Caco-2 (cell line): ENCODE measurements at regions of chr5 and their contacts with region 1.

Region 1: GRCh38 chr5:74903165-74903787 is 37.1 kb upstream of the FAM169A start:
- DNase-seq: peak; percentile 81 to 84
- H3K4me3 ChIP-seq: no peak overlapping the region
- H3K4me3 Mint-ChIP-seq: no peak overlapping the region
- H3K27ac Mint-ChIP-seq: no peak overlapping the region
- H3K4me1 ChIP-seq: peaks cover 7% of the 10 kb centered on the region; the same call in 1 of the 2 replicates
- H3K4me1 Mint-ChIP-seq: peaks cover 7% of the 10 kb centered on the region
- H3K27me3 ChIP-seq: no peaks in the 10 kb centered on the region
- H3K27me3 Mint-ChIP-seq: no peaks in the 10 kb centered on the region
- CTCF ChIP-seq: peak; percentile 83 to 93

Region 2: DNA sequence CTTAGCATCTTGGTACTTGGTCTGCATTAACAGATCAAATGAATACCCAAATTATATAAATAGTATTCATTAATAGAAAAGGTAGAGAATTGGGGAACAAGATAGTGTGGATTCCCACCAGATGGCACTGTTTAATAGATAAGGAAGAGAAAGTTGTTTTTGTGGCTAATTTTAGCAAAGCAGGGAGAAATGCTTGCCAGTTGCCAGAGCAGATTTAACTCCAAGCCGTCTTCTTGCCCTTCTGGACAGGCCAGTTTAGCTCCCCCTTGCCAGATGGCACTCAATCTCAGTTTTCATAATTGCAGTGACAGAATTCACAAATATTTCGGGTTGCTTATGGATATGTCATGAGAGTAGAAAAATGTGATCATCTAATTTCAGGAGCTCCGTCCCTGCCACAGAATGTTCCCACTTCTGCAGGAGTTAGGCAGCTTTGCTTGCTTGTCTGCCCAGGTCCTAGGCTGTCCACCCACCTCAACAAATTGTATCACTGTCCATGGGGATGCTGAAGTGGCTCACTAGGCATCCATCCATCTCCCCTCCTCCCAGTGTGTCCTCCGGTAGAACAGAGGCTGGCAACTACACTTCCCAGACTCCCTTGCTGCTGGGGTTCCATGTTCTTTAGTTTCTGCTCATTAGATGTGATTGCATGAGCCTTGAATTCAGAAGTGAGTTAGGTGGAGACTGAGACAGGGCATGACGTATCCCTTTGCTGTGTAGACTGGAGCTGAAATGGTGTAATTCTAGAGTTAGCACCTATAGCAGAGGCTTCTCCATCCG is 230.1 kb before region 1 on chr5:
- CTCF ChIA-PET with region 1: no interaction called
- POLR2A ChIA-PET with region 1: no interaction called
- intact Hi-C with region 1: loop called (anchors 1 kb)
- DNase-seq: peak in 1 of 2 experiments; percentile 30
- H3K4me3 ChIP-seq: no peak overlapping the region
- H3K4me3 Mint-ChIP-seq: no peak overlapping the region
- H3K27ac Mint-ChIP-seq: no peak overlapping the region
- H3K4me1 ChIP-seq: no peaks in the 10 kb centered on the region; the same call in 1 of the 2 replicates
- H3K4me1 Mint-ChIP-seq: peaks cover 18% of the 10 kb centered on the region
- H3K27me3 ChIP-seq: no peaks in the 10 kb centered on the region
- H3K27me3 Mint-ChIP-seq: no peaks in the 10 kb centered on the region
- CTCF ChIP-seq: peak; percentile 21 to 29

Region 3: GRCh38 chr5:74766849-74767578 is 136.3 kb before region 1 on chr5 and contains the starts of genes GFM2 and NSA2:
- CTCF ChIA-PET with region 1: interaction called, 5 read pairs
- POLR2A ChIA-PET with region 1: no interaction called
- intact Hi-C with region 1: loop called (anchors 1 kb)
- DNase-seq: peak; percentile 92 to 93
- H3K4me3 ChIP-seq: peak within 1 kb of the TSS; percentile 75
- H3K4me3 Mint-ChIP-seq: peak within 1 kb of the TSS; percentile 86
- H3K27ac Mint-ChIP-seq: peak within 1 kb of the TSS; percentile 97
- H3K4me1 ChIP-seq: peaks cover 30% of the 10 kb centered on the region
- H3K4me1 Mint-ChIP-seq: peaks cover 14% of the 10 kb centered on the region
- H3K27me3 ChIP-seq: no peaks in the 10 kb centered on the region
- H3K27me3 Mint-ChIP-seq: no peaks in the 10 kb centered on the region
- CTCF ChIP-seq: no peak
- total RNA-seq, gene GFM2: 43.6 and 46.5 TPM in 2 replicates
- total RNA-seq, gene NSA2: 190 and 202 TPM in 2 replicates

Region 4: DNA sequence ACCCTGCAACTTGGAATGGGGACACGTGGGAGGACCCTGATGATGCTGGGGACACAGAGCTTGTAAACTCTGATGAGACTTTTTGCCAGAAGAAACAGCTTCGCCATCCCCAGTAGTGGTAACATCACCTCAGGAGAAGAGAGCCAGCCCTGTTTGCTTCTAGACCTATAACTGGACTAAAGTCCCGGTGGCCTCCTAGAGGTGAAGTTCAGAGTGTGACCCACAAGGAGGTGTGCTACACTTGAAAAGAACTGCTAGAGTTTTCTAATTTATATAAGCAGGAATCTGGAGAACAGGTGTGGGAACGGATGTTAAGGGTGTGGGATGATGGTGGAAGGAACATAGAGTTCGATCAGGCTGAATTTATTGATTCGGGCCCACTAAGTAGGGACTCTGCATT is 116.4 kb before region 1 on chr5:
- CTCF ChIA-PET with region 1: no interaction called
- POLR2A ChIA-PET with region 1: no interaction called
- intact Hi-C with region 1: loop called (anchors 1 kb)
- DNase-seq: no peak
- H3K4me3 ChIP-seq: no peak overlapping the region
- H3K4me3 Mint-ChIP-seq: no peak overlapping the region
- H3K27ac Mint-ChIP-seq: no peak overlapping the region
- H3K4me1 ChIP-seq: no peaks in the 10 kb centered on the region
- H3K4me1 Mint-ChIP-seq: no peaks in the 10 kb centered on the region
- H3K27me3 ChIP-seq: no peaks in the 10 kb centered on the region
- H3K27me3 Mint-ChIP-seq: no peaks in the 10 kb centered on the region
- CTCF ChIP-seq: peak in 1 of 2 experiments; percentile 10

Region 5: DNA sequence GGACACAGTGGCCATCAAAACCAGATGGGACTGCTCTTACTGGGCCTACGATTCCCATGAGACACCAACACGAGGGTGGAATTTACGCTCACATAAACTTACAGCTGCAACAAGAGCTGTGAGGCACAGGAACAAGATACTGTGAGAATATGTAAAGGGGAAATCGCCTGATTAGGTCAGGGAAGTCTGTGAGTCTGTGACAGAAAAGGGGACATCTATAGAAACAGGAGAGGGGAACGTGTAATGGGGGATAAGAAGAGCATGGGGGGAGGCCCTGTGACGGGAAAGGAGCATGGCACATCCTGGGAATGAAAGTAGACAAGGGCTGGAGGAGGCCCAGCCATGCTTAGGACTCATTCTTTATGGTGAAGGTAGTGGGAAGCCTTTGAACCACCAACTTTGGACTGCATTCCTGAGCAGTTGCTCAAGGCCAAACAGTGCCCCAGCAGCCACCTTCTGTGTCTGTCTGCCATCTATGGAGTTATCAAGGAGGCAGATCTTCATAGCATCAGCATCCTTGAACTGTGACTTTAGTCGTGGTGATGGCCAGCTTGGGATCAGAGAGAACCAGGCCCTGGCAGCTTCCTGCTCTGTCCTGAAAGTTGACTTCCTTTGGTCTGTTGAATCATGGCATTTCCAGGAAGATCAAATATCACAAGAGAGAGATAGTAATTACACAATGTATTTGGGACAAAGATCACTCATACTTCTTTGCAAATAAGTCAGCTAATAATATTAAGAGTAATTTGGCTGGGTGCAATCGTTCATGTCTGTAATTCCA is 50.9 kb after region 1 on chr5:
- CTCF ChIA-PET with region 1: no interaction called
- POLR2A ChIA-PET with region 1: no interaction called
- intact Hi-C with region 1: no loop called
- DNase-seq: peak; percentile 52 to 85
- H3K4me3 ChIP-seq: no peak overlapping the region
- H3K4me3 Mint-ChIP-seq: peak overlapping the region; percentile 30
- H3K27ac Mint-ChIP-seq: peak overlapping the region; percentile 91
- H3K4me1 ChIP-seq: peaks cover 86% of the 10 kb centered on the region
- H3K4me1 Mint-ChIP-seq: peaks cover 71% of the 10 kb centered on the region
- H3K27me3 ChIP-seq: no peaks in the 10 kb centered on the region
- H3K27me3 Mint-ChIP-seq: no peaks in the 10 kb centered on the region
- CTCF ChIP-seq: no peak